Activated T-helper 1 cell treated with anti-CD3 and anti-CD28 coated beads, Interleukin-12 subunit alpha, Interleukin-12 subunit beta, Interleukin-2, Interleukin-4 antibody, amounts not matched to agents 30 ng/mL and 10 ng/mL and 1 ng/mL, durations not matched to agents 14 hours and 24 hours and 36 hours (primary cell): ENCODE measurements at regions of chr17 and their contacts with region 1.

Region 1: DNA sequence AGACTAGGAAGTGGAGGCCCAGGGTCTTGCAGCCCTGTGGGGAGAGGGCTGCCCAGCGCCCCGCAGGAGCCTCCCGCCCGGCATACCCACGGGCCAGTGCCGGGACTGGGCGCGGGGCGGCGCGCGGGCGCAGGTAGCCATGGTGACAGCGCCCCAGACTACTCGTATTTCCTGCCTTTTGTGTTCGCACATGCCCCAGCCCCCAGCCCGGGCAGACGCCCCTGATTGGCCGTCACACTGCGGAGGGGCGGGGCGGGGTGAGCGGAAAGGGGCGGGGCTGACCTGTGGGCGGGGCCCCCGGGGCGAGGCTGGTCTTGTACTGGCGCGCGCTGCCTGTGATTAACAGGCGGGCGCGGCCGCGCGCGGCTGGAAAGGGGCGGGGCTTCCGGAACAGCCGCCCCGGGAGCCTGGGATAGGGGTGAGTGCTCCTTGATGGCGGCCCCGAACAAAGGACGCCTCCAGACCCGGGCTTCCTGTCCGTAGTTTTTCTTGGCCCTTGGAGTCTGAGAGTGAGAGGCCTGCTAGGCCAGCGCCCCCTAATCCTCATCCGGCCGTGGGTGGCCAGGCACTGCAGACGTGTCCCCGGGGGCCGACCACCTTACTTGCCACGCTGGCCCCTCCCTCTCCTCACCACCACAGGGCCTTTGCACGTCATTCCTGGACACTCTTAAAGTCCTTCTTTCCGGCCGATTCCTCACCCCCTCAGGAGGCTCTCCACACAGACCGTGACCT is 71.0 kb downstream of the RAI1 start:
- DNase-seq: peak; percentile 97
- H3K4me3 Mint-ChIP-seq: peak overlapping the region; percentile 91
- H3K27ac Mint-ChIP-seq: peak overlapping the region; percentile 95
- H3K4me1 Mint-ChIP-seq: peaks cover 46% of the 10 kb centered on the region
- H3K27me3 Mint-ChIP-seq: no peaks in the 10 kb centered on the region

Region 2: GRCh38 chr17:17591355-17592298 is 160.6 kb before region 1 on chr17 and contains the start of gene PEMT:
- intact Hi-C with region 1: loop called (anchors 1 kb)
- DNase-seq: peak; percentile 90
- H3K4me3 Mint-ChIP-seq: peak within 1 kb of the TSS; percentile 98
- H3K27ac Mint-ChIP-seq: peak within 1 kb of the TSS; percentile 94
- H3K4me1 Mint-ChIP-seq: peaks cover 18% of the 10 kb centered on the region
- H3K27me3 Mint-ChIP-seq: no peaks in the 10 kb centered on the region
- total RNA-seq, gene PEMT: 39.9 and 45.1 TPM in 2 replicates

Region 3: GRCh38 chr17:17729620-17730249 is 22.5 kb before region 1 on chr17:
- intact Hi-C with region 1: loop called (anchors 1 kb)
- DNase-seq: peak; percentile 41
- H3K4me3 Mint-ChIP-seq: no peak overlapping the region
- H3K27ac Mint-ChIP-seq: no peak overlapping the region
- H3K4me1 Mint-ChIP-seq: peaks cover 16% of the 10 kb centered on the region
- H3K27me3 Mint-ChIP-seq: peaks cover 5% of the 10 kb centered on the region

Region 4: GRCh38 chr17:17740615-17741348 is 11.5 kb before region 1 on chr17:
- intact Hi-C with region 1: no loop called
- DNase-seq: no peak
- H3K4me3 Mint-ChIP-seq: peak overlapping the region; percentile 7
- H3K27ac Mint-ChIP-seq: no peak overlapping the region
- H3K4me1 Mint-ChIP-seq: peaks cover 3% of the 10 kb centered on the region
- H3K27me3 Mint-ChIP-seq: no peaks in the 10 kb centered on the region

Region 5: DNA sequence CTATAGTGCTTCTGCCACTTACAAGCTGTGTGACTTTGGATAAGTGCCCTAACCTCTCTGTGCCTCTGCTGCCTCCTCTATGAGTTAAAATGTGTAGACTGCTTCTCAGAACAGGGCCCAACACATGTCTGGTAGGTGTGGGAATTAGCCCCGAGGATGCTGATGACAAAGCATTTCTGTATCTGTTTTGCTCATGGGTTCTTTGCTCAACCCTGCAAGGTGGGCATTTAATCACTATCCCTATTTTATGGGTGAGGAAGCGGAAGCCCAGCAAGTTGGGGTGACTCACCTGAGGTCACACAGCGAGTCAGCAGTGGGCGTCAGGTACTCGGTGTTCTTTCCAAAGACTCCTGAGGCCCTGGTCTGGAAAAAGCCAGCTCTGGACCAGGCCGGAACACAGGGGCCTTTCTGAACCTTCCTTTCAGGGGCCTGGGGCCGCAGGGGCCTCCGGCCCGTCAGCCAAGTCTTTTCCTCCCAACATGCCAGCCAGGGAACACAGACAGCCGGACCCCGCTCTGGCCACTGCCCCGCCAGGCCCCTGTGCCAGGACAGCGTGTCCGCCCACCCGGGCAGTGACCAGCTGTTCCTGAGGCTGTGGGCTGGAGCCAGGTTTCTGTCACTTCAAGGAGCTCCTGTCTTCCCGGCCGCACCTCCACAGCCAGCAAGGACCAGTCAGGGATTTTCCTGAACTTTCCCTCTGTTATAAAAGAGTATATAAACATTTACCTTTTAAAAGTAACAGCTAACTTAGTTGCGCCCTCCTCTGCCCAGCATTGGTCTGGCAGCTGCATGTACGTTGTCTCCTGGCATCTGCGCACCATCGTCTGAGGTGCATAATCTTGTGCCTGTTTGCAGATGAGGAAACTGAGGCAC is 22.0 kb after region 1 on chr17:
- intact Hi-C with region 1: no loop called
- DNase-seq: no peak
- H3K4me3 Mint-ChIP-seq: no peak overlapping the region
- H3K27ac Mint-ChIP-seq: no peak overlapping the region
- H3K4me1 Mint-ChIP-seq: peaks cover 9% of the 10 kb centered on the region
- H3K27me3 Mint-ChIP-seq: peaks cover 7% of the 10 kb centered on the region

Region 6: DNA sequence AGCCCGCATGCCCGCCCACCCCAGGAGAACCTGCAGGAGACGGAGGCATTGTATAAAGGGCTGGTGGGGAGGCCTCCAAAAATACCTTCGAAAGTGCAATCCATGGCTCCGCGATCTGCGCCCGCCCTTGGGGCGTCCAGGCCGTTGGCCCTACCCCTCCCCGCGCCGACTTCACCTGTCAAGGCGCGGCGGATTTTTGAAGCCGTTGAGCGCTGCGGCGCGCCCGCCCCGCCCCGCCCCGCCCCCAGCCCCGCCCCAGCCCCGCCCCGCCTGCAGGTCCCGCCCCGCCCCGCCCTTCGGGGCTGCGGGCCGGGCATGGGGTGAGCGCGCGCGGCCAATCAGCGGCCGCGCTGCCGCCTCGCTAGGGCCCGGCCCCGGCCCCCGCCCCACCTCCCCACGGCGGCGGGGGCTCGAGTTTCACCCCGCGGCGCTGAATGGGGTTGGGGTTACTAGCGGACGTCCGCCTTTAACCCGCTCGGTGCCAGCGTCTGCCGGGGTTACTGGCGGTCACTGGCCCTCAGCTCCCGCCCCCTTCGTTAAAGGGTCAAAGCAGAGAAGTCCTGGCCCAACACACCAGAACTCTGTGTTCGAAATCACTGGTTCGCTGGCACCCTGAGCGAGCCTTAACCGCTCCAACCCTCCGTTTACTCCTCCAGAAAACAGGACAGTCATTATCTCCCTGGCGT is 71.3 kb after region 1 on chr17:
- intact Hi-C with region 1: loop called (anchors 1 kb)
- DNase-seq: peak; percentile 82
- H3K4me3 Mint-ChIP-seq: peak overlapping the region; percentile 80
- H3K27ac Mint-ChIP-seq: peak overlapping the region; percentile 91
- H3K4me1 Mint-ChIP-seq: peaks cover 92% of the 10 kb centered on the region
- H3K27me3 Mint-ChIP-seq: no peaks in the 10 kb centered on the region

Region 7: DNA sequence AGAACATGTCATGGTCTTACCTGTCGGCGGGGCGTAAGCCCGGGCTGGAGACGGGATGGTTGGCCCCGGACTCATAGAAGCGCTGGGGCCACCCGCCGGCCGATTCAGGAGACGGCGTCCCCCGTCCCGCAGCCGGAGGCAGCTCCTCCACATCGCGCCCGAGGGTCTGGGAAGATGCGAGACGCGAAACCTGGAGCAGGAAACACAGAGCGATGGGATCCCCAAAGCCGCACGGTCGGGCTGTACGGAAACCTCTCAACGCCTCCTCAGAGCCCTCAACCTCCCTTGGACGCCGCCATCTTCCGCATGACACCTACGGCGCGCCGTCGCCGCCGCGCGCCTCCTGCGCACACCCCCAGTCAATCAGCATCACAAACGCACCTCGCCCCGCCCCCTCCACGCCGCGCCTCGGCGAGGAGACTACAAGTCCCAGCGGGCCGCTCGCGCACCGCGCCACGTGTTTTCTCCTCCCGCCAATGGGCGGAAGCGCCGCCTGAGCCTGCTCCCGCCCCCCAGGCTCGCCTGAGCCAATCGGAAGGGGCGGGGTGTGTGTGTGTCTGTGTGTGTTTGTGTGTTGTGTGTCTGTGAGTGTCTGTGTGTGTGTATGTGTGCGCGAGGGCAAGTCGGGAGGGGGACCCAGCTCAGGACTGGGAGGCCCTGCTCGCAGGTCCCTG is 286.7 kb after region 1 on chr17 and contains the starts of genes ATPAF2 and GID4:
- intact Hi-C with region 1: loop called (anchors 1 kb)
- DNase-seq: peak; percentile 100
- H3K4me3 Mint-ChIP-seq: peak within 1 kb of the TSS; percentile 100
- H3K27ac Mint-ChIP-seq: peak within 1 kb of the TSS; percentile 99
- H3K4me1 Mint-ChIP-seq: peaks cover 43% of the 10 kb centered on the region
- H3K27me3 Mint-ChIP-seq: no peaks in the 10 kb centered on the region
- total RNA-seq, gene ATPAF2: 34.9 and 37.8 TPM in 2 replicates
- total RNA-seq, gene GID4: 9.6 and 10.0 TPM in 2 replicates